Activated naive CD4-positive, alpha-beta T cell treated with anti-CD3 and anti-CD28 coated beads for 36 hours (primary cell): ENCODE measurements at regions of chr11 and their contacts with region 1.

Region 1: DNA sequence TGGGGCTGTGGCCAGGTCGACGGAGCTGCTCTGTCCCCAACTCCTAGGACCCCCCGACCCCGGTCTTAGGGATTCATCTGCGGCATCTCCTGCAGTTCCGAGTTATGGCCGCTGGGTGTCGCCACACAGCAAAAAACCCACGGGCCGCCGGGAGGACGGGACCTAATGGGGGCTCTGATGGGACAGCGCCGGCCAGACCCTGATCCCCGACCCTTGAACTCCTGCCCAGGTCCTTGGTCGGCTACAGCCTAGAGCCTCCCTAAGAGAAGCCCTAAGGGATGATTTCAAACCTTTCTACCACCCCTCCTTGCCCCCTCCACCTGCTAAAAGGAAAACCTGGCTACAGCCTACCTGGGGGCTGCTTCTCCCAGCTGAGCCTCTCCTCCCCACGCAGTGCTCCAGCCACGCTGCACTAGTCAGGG is 30.8 kb upstream of the LRRC10B start:
- DNase-seq: peak; percentile 57
- H3K4me3 Mint-ChIP-seq: no peak overlapping the region
- H3K27ac Mint-ChIP-seq: no peak overlapping the region
- H3K4me1 Mint-ChIP-seq: peaks cover 10% of the 10 kb centered on the region
- H3K27me3 Mint-ChIP-seq: peaks cover 2% of the 10 kb centered on the region

Region 2: DNA sequence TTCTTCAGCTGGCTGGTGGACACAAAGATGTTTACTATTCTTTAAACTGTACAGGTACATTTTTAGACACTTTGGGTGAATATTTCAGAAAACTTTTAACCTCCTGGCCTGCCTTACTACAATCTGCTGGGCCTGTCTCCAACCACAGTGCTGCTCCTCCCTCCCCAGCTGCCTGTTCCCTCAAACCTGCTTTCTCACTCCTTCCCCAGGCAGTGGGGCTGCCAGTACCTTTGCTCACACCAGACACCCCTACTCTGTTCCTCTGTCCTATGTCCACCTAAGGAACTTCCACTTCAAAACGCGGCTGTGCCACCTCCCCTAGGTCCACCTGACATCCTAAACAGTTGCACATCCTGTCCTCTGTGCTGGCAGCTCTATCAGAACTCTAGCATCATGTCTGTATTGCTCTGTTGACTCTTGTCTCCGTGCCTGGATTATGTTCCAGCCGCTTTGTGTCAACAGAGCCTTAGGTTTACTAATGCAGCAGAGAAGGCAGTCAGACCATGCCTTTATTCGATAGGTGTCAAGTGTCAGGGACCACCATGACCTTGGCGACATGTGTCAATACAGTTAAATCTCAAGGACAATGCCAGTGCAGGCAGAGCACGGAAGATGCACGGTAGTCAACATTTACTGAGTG is 597.0 kb before region 1 on chr11:
- CTCF ChIA-PET with region 1: no interaction called
- intact Hi-C with region 1: no loop called
- DNase-seq: no peak
- H3K4me3 Mint-ChIP-seq: no peak overlapping the region
- H3K27ac Mint-ChIP-seq: no peak overlapping the region
- H3K4me1 Mint-ChIP-seq: peaks cover 2% of the 10 kb centered on the region
- H3K27me3 Mint-ChIP-seq: no peaks in the 10 kb centered on the region

Region 3: DNA sequence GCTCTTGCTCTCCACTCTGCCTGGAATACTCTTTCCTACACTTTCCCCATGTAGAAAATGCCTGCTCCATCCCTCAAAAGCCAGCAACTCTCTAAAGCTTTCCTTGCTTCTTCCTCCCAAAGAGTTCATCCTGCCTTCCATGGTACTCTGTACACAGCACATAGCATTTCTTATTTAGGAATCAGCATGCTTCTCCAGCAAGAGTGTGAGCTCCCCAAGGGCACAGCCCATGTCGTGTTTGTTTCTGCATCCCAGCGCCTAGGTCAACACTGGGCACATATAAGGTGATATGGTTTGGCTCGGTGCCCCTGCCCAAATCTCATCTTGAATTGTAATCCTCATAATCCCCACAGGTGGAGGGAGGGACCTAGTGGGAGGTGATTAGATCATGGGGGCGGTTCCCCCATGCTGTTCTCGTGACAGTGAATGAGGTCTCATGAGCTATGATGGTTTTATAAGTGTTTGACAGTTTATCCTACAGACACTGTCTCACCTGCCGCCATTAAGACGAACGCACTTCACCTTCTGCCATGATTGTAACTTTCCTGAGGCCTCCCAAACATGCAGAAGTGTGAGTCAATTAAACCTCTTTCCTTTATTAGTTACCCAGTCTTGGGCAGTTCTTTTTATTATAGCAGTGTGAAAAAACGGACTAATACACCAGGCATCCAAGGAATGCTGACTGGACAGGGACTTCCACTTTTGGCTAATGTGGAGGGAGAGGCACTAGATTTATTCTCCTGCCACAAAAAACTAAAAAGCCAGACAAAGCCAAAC is 324.7 kb before region 1 on chr11:
- CTCF ChIA-PET with region 1: no interaction called
- intact Hi-C with region 1: no loop called
- DNase-seq: no peak
- H3K4me3 Mint-ChIP-seq: no peak overlapping the region
- H3K27ac Mint-ChIP-seq: no peak overlapping the region
- H3K4me1 Mint-ChIP-seq: peaks cover 11% of the 10 kb centered on the region
- H3K27me3 Mint-ChIP-seq: no peaks in the 10 kb centered on the region

Region 4: DNA sequence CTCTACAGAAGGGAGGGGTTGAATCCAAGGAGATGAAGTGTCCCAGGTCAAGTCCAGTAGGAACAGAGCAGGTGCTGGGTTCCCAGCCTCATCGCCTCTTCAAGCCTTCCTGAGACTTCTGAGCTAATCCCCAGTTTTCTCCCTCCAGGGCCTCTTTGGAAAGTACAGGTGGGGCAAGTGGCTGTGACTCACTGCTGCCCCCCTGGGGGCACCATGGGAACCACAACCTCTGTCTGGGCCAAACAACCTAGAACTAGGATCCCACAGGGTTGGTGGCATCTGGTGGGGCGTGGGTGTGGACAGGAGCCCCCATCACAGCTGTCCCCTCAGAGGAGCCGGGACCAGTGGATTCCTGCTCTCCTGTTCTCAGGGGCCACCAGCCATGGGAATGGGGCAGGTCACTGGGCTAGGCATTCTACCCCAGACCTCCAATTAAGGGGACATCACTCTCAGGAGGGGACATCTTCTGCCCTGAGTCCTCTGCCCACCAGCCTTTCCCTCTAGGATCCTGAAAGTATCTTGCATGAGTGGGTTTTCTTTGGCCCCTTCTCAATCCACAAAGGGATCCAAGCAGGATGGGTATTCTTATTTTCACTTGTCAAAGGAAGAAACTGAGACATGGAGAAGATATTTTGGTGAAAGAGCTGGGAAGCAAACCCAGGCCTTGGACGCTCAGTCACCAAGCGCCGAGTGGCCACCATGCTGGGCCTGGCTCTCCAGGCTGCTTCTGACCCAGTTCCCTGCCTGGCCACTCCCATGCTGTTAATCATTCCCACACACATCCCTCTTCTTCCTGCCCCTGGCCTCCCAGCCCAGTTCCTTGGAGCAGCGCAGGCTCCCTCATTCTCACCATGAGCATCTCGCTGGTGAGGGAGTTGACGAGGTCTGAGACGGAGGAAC is 54.7 kb after region 1 on chr11:
- CTCF ChIA-PET with region 1: interaction called, 15 read pairs
- intact Hi-C with region 1: no loop called
- DNase-seq: peak; percentile 59
- H3K4me3 Mint-ChIP-seq: no peak overlapping the region
- H3K27ac Mint-ChIP-seq: no peak overlapping the region
- H3K4me1 Mint-ChIP-seq: no peaks in the 10 kb centered on the region
- H3K27me3 Mint-ChIP-seq: peaks cover 5% of the 10 kb centered on the region

Region 5: DNA sequence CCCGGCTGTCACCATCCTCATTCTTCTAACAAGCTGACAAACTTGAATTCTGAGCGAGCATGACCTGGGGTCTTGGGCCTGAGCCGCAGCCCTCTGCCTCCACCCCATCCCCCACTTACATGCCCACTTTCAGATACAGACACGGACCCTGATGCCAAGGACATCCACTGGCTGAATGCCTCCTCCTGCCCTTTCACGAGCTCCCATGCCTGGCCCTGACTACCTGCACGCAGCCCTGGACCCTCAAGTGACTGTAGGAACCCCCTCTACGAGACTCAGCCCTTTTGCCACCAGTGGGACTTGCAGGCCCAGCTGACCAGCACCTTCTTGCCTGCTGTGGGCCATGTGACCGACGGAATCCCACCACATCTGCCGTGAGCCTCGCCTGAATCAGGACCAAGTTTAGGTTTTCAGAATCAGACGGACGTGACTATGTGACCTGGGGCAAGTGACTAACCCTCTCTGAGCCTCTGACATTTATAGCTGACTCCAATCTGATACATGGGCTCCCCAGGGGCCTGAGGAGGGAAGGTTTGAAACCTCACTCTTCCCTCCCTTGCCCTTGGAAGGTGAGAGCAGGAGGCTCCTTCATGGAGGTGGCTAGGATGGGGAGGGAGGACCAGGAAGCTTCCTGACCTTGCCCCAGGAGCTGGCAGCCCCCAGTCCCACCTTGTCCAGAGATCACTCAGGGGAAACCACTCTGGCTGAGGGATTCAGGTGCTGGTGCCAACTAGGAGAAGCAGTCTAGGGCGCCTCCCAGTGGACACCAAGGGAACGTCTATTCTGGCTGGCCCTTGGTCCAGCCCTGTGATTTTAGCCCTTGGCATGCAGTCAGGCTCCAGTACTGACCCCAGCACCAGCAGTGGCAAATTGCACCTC is 150.1 kb after region 1 on chr11:
- CTCF ChIA-PET with region 1: interaction called, 7 read pairs
- intact Hi-C with region 1: loop called (anchors 1 kb)
- DNase-seq: peak; percentile 68
- H3K4me3 Mint-ChIP-seq: no peak overlapping the region
- H3K27ac Mint-ChIP-seq: no peak overlapping the region
- H3K4me1 Mint-ChIP-seq: no peaks in the 10 kb centered on the region
- H3K27me3 Mint-ChIP-seq: peaks cover 2% of the 10 kb centered on the region